ENCODE measurements at regions of chr20 and their contacts with region 1.

Region 1: DNA sequence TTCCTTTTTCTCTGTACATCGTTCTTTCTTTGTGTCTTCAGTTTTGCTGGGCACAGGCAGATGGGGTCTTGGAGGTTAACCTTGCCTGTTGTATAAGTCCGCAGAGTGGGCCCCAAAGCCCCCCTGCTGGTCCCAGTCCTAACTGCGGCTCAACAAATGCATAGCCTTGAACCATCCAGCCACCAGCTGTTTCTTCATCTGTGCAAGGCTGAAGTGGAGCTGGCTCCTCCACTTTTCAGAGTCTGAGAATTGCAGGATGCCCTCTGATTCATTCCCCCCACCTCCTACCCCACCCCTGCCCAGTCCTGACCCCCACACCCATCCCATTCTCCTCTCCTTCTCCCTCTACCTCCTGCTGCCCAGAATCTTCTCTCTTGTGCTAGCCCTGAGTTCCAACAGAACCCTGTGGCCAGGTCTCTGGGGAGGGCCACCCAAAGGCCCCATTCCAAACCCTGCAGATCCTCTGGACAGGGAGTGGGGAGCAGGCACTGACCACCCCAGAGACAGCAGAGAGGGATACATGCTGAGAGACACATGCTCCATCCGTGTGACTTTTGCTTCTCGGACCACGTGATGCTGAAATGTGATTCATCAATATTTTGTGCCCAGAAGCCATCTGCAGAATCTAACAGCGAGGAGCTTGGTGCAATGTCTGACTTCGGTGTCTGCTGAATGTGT is 386.5 kb upstream of the SULF2 start:
- DNase-seq: no peak
- ATAC-seq: no peak
- H3K4me3 ChIP-seq: no peak overlapping the region
- H3K27ac ChIP-seq: no peak overlapping the region
- H3K4me1 ChIP-seq: no peaks in the 10 kb centered on the region
- H3K27me3 ChIP-seq: peaks cover 18% of the 10 kb centered on the region
- CTCF ChIP-seq: no peak

Region 2: GRCh38 chr20:47989721-47990421 is 182.0 kb before region 1 on chr20:
- CTCF ChIA-PET with region 1: no interaction called
- POLR2A ChIA-PET with region 1: no interaction called
- in situ Hi-C with region 1: no loop called
- intact Hi-C with region 1: loop called (anchors 5 kb)
- DNase-seq: no peak
- ATAC-seq: no peak
- H3K4me3 ChIP-seq: no peak overlapping the region
- H3K27ac ChIP-seq: no peak overlapping the region
- H3K4me1 ChIP-seq: no peaks in the 10 kb centered on the region
- H3K27me3 ChIP-seq: no peaks in the 10 kb centered on the region
- CTCF ChIP-seq: no peak

Region 3: GRCh38 chr20:48102914-48103597 is 68.8 kb before region 1 on chr20:
- CTCF ChIA-PET with region 1: no interaction called
- POLR2A ChIA-PET with region 1: no interaction called
- in situ Hi-C with region 1: no loop called
- intact Hi-C with region 1: no loop called
- DNase-seq: no peak
- ATAC-seq: no peak
- H3K4me3 ChIP-seq: no peak overlapping the region
- H3K27ac ChIP-seq: no peak overlapping the region
- H3K4me1 ChIP-seq: no peaks in the 10 kb centered on the region
- H3K27me3 ChIP-seq: peaks cover 8% of the 10 kb centered on the region
- CTCF ChIP-seq: no peak

Region 4: DNA sequence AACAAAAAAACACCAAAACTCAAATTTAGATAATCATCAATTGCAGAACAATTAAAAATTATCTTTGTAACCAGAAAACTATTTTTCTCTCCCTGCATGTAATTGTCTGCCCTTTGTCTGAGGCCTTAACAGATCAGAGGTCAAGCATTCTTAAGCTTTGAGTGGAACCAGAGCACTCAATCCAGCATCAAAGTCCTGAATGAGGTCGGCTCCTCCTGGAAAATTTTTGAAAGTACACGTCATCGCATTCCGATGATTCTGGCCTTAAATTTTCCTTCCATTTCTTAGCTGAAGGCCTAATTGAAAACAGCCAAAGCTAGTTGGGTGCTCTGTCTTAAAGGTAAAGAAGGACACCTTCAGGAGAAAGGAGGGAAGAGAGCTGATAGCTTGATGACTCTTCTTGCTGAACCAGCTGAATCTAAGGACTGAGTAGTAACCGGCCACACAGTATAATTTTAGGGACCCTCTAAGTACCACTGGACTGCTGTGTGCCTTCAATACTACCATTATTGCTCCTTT is 123.7 kb after region 1 on chr20:
- CTCF ChIA-PET with region 1: no interaction called
- POLR2A ChIA-PET with region 1: no interaction called
- in situ Hi-C with region 1: no loop called
- intact Hi-C with region 1: no loop called
- DNase-seq: peak; percentile 61
- ATAC-seq: peak; percentile 88
- H3K4me3 ChIP-seq: no peak overlapping the region
- H3K27ac ChIP-seq: no peak overlapping the region
- H3K4me1 ChIP-seq: peaks cover 14% of the 10 kb centered on the region
- H3K27me3 ChIP-seq: peaks cover 4% of the 10 kb centered on the region; the same call in 1 of the 2 replicates
- CTCF ChIP-seq: peak; percentile 40

Region 5: DNA sequence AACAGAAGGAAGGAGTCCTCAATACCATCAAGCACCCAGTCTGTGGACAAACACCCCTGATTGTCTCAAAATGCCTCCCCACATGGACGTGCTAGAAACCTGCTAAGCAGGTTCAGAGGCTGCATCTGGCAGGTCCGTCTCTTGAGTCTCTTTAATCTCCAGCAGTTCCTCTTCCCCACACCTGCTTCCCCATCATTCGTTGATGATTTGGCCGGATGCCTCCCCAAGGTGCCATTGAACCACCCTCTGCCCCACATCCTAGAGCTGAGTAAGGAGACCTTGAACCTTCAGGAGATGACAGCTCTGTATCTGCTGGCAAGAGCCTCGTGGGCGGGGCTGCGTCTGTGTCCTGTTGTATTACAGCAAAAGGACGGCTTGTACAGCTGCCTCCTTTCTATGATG is 476.7 kb after region 1 on chr20:
- CTCF ChIA-PET with region 1: no interaction called
- POLR2A ChIA-PET with region 1: no interaction called
- in situ Hi-C with region 1: no loop called
- intact Hi-C with region 1: no loop called
- DNase-seq: no peak
- ATAC-seq: no peak
- H3K4me3 ChIP-seq: no peak overlapping the region
- H3K27ac ChIP-seq: no peak overlapping the region
- H3K4me1 ChIP-seq: no peaks in the 10 kb centered on the region
- H3K27me3 ChIP-seq: no peaks in the 10 kb centered on the region
- CTCF ChIP-seq: no peak